A673 (cell line): ENCODE measurements at regions of chr12 and their contacts with region 1.

Region 1: GRCh38 chr12:55926738-55927587 is 731 bp downstream of the PYM1 start:
- DNase-seq: peak; percentile 97
- H3K4me3 ChIP-seq: peak overlapping the region; percentile 91
- H3K27ac ChIP-seq: peak overlapping the region; percentile 95
- H3K4me1 ChIP-seq: peaks cover 32% of the 10 kb centered on the region
- H3K27me3 ChIP-seq: no peaks in the 10 kb centered on the region
- CTCF ChIP-seq: peak; percentile 96

Region 2: GRCh38 chr12:55824726-55825125 is 102.2 kb before region 1 on chr12:
- CTCF ChIA-PET with region 1: interaction called, 10 read pairs
- POLR2A ChIA-PET with region 1: no interaction called
- intact Hi-C with region 1: no loop called
- DNase-seq: no peak
- H3K4me3 ChIP-seq: no peak overlapping the region
- H3K27ac ChIP-seq: peak overlapping the region; percentile 43
- H3K4me1 ChIP-seq: peaks cover 2% of the 10 kb centered on the region
- H3K27me3 ChIP-seq: no peaks in the 10 kb centered on the region
- CTCF ChIP-seq: no peak

Region 3: DNA sequence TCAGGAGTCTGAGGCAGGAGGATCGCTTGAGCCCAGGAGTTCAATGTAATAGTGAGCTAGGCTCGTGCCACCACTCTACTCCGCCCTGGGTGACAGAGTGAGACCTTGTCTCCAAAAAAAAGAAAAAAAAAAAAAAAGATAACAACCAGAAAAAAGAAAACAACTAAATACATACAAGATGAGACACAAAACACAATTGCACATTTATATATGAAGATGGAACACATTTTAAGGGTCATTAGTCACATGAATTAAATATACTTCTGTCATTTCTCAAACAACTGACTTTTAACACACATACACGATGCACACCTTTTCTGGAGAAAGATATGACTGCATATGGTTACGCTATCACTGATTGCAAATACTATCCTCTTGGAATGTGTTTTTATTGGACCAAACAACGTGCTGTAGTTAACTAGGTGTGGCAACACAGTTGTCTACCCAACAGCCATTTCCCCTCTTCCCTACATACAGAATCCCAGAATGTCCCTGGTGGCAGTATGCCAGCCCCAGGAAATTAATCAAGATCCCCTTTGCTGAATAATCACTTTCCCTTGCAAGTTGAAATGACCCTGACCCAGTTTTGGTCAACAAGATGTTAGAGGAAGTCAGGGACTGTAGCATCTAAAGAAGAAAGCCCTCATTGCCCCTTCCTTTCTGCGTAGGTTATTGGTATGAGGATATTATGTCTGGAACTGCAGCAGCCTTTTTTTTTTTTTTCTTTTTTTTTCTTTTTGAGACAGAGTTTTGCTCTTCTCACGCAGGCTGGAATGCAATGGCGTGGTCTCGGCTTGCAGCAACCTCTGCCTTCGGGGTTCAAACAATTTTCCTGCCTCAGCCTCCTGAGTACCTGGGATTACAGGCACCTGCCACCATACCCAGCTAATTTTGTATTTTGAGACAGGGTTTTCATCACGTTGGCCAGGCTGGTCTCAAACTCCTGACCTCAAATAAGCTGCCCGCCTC is 219.8 kb after region 1 on chr12:
- CTCF ChIA-PET with region 1: no interaction called
- POLR2A ChIA-PET with region 1: no interaction called
- intact Hi-C with region 1: no loop called
- DNase-seq: no peak
- H3K4me3 ChIP-seq: no peak overlapping the region
- H3K27ac ChIP-seq: no peak overlapping the region
- H3K4me1 ChIP-seq: peaks cover 9% of the 10 kb centered on the region
- H3K27me3 ChIP-seq: no peaks in the 10 kb centered on the region
- CTCF ChIP-seq: no peak

Region 4: GRCh38 chr12:56224102-56224701 is 297.2 kb after region 1 on chr12 and contains the start of gene NABP2:
- CTCF ChIA-PET with region 1: no interaction called
- POLR2A ChIA-PET with region 1: no interaction called
- intact Hi-C with region 1: no loop called
- DNase-seq: peak; percentile 99
- H3K4me3 ChIP-seq: peak within 1 kb of the TSS; percentile 65
- H3K27ac ChIP-seq: peak within 1 kb of the TSS; percentile 72
- H3K4me1 ChIP-seq: peaks cover 5% of the 10 kb centered on the region
- H3K27me3 ChIP-seq: no peaks in the 10 kb centered on the region
- CTCF ChIP-seq: peak; percentile 98
- total RNA-seq, gene NABP2: 67.5 and 73.2 TPM in 2 replicates